ENCODE measurements at regions of chr7 and their contacts with region 1.

Region 1: GRCh38 chr7:106041140-106041717 is 70.9 kb downstream of the SYPL1 start:
- DNase-seq: no peak

Region 2: DNA sequence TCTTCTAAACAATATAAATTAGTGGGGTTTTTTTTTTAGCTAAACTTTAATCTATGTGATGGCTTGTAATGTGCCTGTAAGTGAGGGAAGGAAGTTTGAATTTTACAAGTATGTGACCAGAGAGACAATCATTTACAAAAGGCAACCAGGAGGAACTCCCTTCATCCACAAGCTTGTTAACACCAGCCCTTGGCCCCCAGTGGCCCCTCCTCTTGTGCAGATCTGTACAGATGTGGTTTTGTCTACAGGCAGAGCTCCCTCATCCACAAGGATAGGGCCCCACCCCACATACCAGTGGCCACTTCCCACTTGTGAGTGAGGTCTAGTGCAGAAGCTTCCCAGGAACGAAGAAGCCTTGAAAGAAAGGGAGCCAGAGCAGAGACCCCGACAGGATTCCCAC is 1261.3 kb before region 1 on chr7:
- intact Hi-C with region 1: no loop called
- DNase-seq: no peak

Region 3: GRCh38 chr7:105652359-105652993 is 388.8 kb before region 1 on chr7:
- intact Hi-C with region 1: loop called (anchors 5 kb)
- DNase-seq: peak; percentile 93

Region 4: DNA sequence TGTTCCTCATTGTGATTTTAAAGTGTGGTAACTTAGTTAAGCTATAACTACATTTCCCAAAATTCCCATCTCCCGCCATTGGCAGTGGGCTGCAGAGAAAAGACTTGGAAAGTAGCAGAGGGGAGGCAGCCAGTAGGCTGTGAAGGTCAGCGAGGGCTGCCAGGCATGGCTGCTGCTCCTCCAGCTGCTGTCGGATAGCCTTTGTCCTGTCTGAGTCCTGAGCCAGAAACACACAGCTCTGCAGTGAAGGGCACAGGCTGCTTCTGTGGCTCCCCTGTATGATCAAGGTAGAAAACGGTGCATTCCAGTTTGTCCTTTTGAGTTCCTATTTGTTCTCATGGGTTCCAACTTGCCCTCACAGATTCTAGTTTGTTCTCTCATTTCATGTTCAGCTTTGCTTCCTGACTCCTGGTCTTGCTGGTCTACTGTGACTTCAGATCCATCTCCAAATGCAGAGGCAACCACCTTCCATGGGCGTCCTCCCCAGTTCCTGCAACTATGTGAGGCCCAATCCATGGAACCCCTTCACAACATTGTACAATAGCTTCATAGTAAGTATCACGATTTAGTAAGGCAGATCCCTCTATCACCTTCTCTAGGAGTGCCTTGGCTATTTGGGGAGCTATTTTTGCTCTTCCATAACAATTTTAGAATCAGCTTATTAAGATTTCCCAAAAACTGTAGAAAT is 39.2 kb after region 1 on chr7:
- intact Hi-C with region 1: no loop called
- DNase-seq: no peak